BJ (cell line): ENCODE measurements at regions of chr19 and their contacts with region 1.

Region 1: GRCh38 chr19:17229890-17230289 is 3.9 kb downstream of the OCEL1 start:
- DNase-seq: no peak
- H3K4me3 ChIP-seq: no peak overlapping the region
- H3K27me3 ChIP-seq: no peaks in the 10 kb centered on the region
- CTCF ChIP-seq: no peak

Region 2: DNA sequence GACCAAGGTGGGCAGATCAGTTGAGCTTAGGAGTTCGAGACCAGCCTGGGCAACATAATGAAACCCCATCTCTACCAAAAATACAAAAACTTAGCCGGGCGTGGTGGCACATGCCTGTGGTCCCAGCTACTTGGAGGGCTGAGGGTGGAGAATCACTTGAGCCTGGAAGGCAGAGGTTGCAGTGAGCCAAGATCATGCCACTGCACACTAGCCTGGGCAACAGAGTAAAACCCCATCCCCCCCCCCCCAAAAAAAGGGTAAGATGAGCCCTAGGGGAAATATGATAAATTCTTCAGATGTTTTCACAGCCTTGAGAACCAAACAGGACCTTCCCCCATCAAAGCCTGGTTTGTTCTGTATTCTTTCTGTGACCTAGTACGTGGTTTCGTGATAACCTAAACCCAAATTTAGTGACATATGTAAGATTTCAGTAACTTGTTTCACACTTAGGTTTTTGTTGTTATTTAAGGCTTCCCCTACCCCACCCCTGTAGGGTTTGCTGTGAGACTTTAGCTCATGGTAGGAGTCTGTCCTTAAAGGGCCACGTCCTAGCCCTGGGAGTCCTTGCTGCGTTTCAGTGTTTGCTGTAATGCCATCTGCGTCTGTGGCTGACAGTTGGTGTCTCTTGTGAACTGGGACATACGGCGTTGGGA is 104.7 kb before region 1 on chr19:
- CTCF ChIA-PET with region 1: no interaction called
- POLR2A ChIA-PET with region 1: interaction called, 18 read pairs
- DNase-seq: no peak
- H3K4me3 ChIP-seq: no peak overlapping the region
- H3K27me3 ChIP-seq: no peaks in the 10 kb centered on the region
- CTCF ChIP-seq: no peak

Region 3: DNA sequence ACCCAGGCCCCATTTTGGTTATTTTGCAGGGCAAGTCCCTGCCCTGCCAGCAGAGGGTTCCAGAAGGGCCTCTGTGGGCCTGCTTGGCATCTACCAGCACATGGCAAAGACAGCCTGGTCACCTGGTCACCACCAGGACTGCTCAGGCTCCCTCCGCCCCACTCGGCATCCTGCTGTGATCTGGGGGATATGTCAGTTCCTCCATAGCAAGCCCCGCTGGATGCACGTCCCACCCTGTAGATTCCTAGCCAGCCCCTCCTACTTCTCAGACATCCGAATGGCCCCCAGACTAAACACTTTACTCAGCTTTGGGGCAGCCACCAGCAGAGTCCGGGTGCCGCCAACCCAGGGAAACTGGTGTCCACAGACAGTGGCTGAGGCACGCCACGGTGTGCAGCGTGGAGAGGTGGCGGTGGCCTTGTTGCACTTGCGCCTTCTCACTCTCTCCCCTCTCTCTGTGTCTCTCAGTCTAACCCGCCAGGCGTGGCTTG is 46.6 kb before region 1 on chr19:
- CTCF ChIA-PET with region 1: no interaction called
- POLR2A ChIA-PET with region 1: no interaction called
- DNase-seq: no peak
- H3K4me3 ChIP-seq: no peak overlapping the region
- H3K27me3 ChIP-seq: no peaks in the 10 kb centered on the region
- CTCF ChIP-seq: no peak

Region 4: DNA sequence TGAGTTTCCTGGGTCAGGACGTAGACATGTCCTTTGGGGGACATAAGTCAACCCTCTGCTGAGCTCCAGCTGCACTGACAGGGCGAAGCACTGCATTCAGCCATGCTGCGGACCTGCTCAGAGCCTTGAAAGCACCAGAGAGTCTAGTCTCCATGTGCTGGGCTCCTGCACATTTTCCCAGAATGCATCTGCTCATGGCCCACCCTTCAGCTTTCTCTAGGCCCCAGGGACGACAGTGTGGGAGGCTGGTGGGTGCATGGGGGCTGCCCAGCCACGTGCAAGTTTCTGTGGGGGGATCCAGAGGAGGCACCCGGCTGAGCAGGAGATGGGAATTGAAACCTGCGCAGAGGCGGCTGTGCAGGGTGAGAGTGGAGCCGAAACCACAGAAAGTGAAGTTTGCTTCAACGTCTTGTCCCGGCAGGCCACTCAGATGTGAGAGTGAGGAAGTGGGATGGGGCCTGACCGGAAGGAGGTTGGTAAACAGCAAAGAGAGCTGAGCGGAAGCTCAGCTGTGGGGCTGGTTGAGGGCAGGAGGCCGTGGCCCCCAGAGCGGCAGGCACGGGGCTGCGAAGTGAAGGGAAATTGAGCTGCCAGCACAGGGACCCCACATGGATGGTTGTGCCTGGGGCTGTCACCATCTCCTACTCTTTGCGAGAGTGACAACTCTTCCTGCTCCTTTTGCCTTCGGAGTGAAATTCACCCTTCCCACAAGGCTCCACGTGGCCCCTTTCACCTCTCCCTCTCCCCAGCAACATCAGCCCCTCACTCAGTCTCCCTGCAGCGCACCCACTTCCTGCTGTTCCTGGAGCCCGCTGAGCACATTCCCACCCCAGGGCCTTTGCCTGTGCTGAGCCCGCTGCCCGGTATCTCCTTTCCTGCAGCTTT is 293.3 kb after region 1 on chr19:
- CTCF ChIA-PET with region 1: no interaction called
- POLR2A ChIA-PET with region 1: no interaction called
- DNase-seq: no peak
- H3K4me3 ChIP-seq: no peak overlapping the region
- H3K27me3 ChIP-seq: no peaks in the 10 kb centered on the region
- CTCF ChIP-seq: no peak